GM12878 (cell line): ENCODE measurements at regions of chr3 and their contacts with region 1.

Region 1: DNA sequence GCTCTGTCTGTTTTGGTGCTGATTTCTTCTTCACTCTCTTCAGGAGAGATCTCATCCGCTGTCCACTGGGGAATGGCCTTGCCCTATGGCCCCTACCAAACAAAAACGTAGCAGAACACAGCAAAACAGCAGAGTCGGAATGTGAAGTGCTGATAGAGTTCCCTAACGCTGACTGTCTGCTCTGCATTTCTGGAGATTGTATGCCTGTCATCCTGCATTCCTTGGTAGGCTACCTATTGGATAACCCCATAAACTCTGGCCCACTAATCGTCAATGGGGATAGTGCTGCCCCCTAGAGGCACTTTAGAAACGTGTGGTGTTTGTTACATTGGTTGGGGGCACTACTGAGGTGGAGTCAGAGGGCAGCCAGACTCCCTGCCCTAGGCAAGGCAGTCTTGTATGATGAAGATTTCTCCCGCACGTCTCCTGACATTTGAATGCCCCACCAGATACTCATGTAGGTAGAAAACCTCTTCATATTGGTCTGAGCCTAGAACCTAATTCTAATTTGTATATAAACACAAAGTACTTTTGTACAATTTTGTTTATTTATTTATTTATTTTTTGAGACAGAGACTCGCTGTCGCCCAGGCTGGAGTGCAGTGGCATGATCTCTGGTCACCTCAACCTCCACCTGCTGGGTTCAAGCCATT is 15.6 kb upstream of the MAGEF1 start:
- DNase-seq: no peak
- ATAC-seq: peak; percentile 93
- H3K4me3 ChIP-seq: no peak overlapping the region
- H3K27ac ChIP-seq: no peak overlapping the region
- H3K4me1 ChIP-seq: no peaks in the 10 kb centered on the region
- H3K27me3 ChIP-seq: no peaks in the 10 kb centered on the region; a peak in 2 of 4 replicates
- CTCF ChIP-seq: peak; percentile 54 to 73 (median 56)
- EP300 ChIP-seq: no peak
- POLR2A ChIP-seq: no peak
- RAD21 ChIP-seq: peak; percentile 59

Region 2: DNA sequence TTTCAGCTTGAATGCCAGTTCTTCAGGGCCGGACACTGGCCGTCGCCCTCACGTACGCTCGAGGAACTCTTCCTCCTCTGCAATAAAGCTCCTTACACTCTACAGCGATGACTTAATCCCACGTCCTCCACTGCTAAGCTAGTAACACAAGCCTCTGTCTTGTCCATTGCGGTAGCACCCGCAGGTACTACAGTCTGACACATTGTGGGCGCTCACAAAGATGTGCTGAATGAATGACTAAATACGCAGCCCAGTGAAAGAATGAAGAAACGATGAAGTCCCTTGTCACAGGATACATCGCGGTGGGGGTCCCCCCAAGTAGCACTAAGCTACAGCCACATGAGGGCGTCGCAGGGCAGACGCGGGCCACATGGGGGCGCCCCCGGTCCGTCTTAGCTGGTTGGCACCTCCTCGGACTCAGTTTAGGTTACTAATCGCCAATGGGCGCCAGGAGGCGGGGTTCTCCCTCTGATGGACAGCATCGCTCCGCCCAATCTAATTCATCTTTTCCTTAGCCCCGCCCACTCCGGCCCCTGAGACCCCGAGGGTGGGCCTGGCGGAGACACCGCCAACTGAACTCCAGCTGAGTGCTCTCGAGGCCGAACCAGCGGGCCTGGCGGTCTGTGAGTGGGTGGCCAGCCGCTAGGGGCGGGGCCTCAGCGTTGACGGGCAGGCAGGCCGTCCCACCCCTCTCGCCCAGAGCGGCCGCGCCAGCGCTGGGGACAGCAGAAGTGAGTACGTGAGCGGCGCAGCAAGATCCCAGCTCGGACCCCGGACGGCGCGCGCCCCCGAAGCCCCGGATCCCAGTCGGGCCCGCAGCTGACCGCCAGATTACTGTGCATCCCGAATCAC is 166.2 kb before region 1 on chr3 and contains the start of gene EPHB3:
- CTCF ChIA-PET with region 1: interaction called, 5 read pairs
- POLR2A ChIA-PET with region 1: no interaction called
- RAD21 ChIA-PET with region 1: interaction called, 7 read pairs
- SMC1A ChIA-PET with region 1: interaction called, 3 read pairs
- in situ Hi-C with region 1: no loop called
- intact Hi-C with region 1: loop called (anchors 1 kb)
- DNase-seq: peak; percentile 34
- ATAC-seq: peak; percentile 96
- H3K4me3 ChIP-seq: no peak within 1 kb of the TSS
- H3K27ac ChIP-seq: no peak within 1 kb of the TSS
- H3K4me1 ChIP-seq: peaks cover 8% of the 10 kb centered on the region; the same call in 1 of the 2 replicates
- H3K27me3 ChIP-seq: peaks cover 8 to 18% of the 10 kb centered on the region in 2 experiments
- CTCF ChIP-seq: peak; percentile 84 to 99 (median 86); a peak in 5 of 6 replicates
- EP300 ChIP-seq: no peak
- POLR2A ChIP-seq: no peak
- RAD21 ChIP-seq: peak; percentile 86
- polyA plus RNA-seq, gene EPHB3: not detected